ENCODE measurements at regions of chr2 and their contacts with region 1.

Region 1: DNA sequence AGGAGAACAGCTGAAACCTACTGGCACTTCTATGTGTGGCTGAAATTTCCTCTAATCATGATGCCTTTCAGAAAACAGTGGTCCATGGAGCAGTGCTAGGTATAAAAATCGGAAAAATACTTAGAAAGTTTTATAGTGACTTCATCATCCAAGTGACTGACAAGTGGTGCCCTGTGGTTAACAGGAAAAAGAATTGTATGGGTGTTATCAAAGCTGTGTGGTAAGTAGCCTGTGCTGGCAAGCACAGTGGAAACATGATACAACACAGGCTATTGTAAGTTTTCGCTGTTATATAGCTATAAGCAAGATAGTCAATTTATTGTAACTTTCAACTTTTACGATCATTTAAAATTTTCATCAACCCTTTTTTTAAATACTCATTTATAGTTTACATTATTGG is 1599.7 kb upstream of the ZEB2 start:
- DNase-seq: no peak
- H3K4me3 Mint-ChIP-seq: no peak overlapping the region
- H3K27ac Mint-ChIP-seq: no peak overlapping the region
- H3K4me1 Mint-ChIP-seq: no peaks in the 10 kb centered on the region
- H3K27me3 Mint-ChIP-seq: no peaks in the 10 kb centered on the region

Region 2: DNA sequence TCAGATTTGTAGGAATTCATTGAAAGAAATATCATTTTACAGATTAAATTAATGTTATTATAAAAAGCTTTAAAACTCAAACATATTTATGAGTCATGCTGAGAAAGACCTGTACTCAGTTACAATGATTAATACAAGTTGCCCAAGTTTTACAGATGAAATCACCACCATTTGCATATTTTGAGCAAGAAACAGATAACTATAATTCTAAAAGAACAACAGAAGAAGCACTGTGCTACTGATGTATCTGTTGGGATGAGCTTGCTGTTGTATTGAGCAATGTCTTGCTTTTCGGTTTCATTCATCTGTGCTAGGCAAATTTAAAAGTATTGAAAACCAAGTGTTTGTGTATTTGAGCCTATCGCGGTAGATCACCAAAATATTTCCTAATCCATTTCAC is 10.6 kb before region 1 on chr2:
- CTCF ChIA-PET with region 1: no interaction called
- intact Hi-C with region 1: loop called (anchors 1 kb)
- DNase-seq: no peak
- H3K4me3 Mint-ChIP-seq: no peak overlapping the region
- H3K27ac Mint-ChIP-seq: no peak overlapping the region
- H3K4me1 Mint-ChIP-seq: no peaks in the 10 kb centered on the region
- H3K27me3 Mint-ChIP-seq: no peaks in the 10 kb centered on the region

Region 3: DNA sequence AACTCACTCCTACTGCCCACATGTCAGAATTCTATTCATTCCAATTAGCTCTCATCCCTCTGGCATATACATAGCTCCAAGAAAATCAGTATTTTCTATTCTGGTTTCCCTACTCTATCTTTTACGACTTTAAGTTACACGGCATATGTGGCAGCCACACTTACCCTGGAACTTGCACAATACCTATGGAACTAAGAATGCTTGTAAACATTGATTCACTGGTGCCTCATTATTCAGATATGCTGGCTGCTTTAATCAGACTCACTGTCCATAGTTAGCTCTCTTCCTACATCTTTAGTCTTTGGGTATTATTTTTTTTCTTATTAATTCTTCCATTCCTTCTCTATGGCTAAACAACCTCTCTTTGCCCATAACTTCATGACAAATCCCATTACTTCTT is 205.4 kb after region 1 on chr2:
- CTCF ChIA-PET with region 1: no interaction called
- intact Hi-C with region 1: no loop called
- DNase-seq: no peak
- H3K4me3 Mint-ChIP-seq: no peak overlapping the region
- H3K27ac Mint-ChIP-seq: no peak overlapping the region
- H3K4me1 Mint-ChIP-seq: no peaks in the 10 kb centered on the region
- H3K27me3 Mint-ChIP-seq: no peaks in the 10 kb centered on the region